ENCODE measurements at regions of chr1 and their contacts with region 1.

Region 1: GRCh38 chr1:191043066-191043465 is 565.4 kb upstream of the BRINP3 start:
- DNase-seq: no peak
- H3K4me3 Mint-ChIP-seq: no peak overlapping the region
- H3K27ac Mint-ChIP-seq: no peak overlapping the region
- H3K4me1 Mint-ChIP-seq: no peaks in the 10 kb centered on the region
- H3K27me3 Mint-ChIP-seq: no peaks in the 10 kb centered on the region
- CTCF ChIP-seq: no peak

Region 2: DNA sequence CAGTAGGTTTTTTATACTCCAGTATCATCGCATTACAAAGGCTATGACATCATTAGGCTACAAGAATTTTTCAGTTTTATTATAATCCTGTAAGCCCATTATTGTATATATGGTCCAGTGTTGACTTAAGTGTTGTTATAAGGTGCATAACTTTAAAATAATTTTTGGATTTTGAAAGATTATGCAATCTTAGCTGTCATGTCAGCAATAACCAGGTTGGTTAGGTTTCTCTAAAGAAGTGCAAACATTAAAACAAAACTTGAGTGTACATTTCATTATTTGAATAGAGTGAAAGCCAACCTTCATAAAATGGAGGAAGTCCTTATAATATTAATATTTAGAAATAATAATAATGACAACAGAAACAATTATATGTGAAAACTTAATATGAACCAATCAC is 45.3 kb before region 1 on chr1:
- CTCF ChIA-PET with region 1: no interaction called
- POLR2A ChIA-PET with region 1: no interaction called
- intact Hi-C with region 1: loop called (anchors 1 kb)
- DNase-seq: no peak
- H3K4me3 Mint-ChIP-seq: no peak overlapping the region
- H3K27ac Mint-ChIP-seq: no peak overlapping the region
- H3K4me1 Mint-ChIP-seq: no peaks in the 10 kb centered on the region
- H3K27me3 Mint-ChIP-seq: no peaks in the 10 kb centered on the region
- CTCF ChIP-seq: no peak

Region 3: DNA sequence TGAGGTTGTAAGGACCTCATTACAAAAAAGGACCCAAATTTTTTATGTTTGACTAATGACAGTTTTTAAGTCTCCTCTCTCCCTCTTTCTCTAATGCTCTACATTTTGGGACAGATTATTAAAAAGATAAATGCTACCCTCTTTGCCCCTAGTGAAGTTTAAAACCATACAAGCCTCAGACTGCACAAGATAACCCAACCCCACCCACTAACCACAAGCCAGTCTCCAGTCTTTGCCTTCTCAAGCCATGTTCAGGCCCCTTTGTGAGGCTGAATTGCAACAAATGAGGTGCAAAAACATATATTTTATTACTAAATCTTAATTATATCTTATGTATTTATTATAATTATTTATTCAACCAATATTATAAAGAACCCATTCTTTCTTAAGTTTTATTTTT is 31.8 kb after region 1 on chr1:
- CTCF ChIA-PET with region 1: no interaction called
- POLR2A ChIA-PET with region 1: no interaction called
- intact Hi-C with region 1: no loop called
- DNase-seq: no peak
- H3K4me3 Mint-ChIP-seq: no peak overlapping the region
- H3K27ac Mint-ChIP-seq: no peak overlapping the region
- H3K4me1 Mint-ChIP-seq: no peaks in the 10 kb centered on the region
- H3K27me3 Mint-ChIP-seq: no peaks in the 10 kb centered on the region
- CTCF ChIP-seq: no peak

Region 4: GRCh38 chr1:191222206-191222605 is 179.1 kb after region 1 on chr1:
- CTCF ChIA-PET with region 1: no interaction called
- POLR2A ChIA-PET with region 1: no interaction called
- intact Hi-C with region 1: no loop called
- DNase-seq: no peak
- H3K4me3 Mint-ChIP-seq: no peak overlapping the region
- H3K27ac Mint-ChIP-seq: no peak overlapping the region
- H3K4me1 Mint-ChIP-seq: no peaks in the 10 kb centered on the region
- H3K27me3 Mint-ChIP-seq: no peaks in the 10 kb centered on the region
- CTCF ChIP-seq: no peak

Region 5: GRCh38 chr1:191517803-191518202 is 474.7 kb after region 1 on chr1:
- CTCF ChIA-PET with region 1: no interaction called
- POLR2A ChIA-PET with region 1: no interaction called
- intact Hi-C with region 1: no loop called
- DNase-seq: no peak
- H3K4me3 Mint-ChIP-seq: no peak overlapping the region
- H3K27ac Mint-ChIP-seq: no peak overlapping the region
- H3K4me1 Mint-ChIP-seq: no peaks in the 10 kb centered on the region
- H3K27me3 Mint-ChIP-seq: no peaks in the 10 kb centered on the region
- CTCF ChIP-seq: no peak